ENCODE measurements at regions of chr3 and their contacts with region 1.

Region 1: GRCh38 chr3:132253262-132253878 is 63.8 kb upstream of the ACP3 start:
- DNase-seq: peak; percentile 44 to 67 (median 49)
- ATAC-seq: peak; percentile 63
- H3K4me3 ChIP-seq: no peak overlapping the region
- H3K27ac ChIP-seq: no peak overlapping the region
- H3K4me1 ChIP-seq: peaks cover 8% of the 10 kb centered on the region
- H3K27me3 ChIP-seq: no peaks in the 10 kb centered on the region
- CTCF ChIP-seq: peak; percentile 65 to 84 (median 78)
- POLR2A ChIP-seq: no peak

Region 2: GRCh38 chr3:131728898-131729611 is 524.3 kb before region 1 on chr3:
- intact Hi-C with region 1: no loop called
- DNase-seq: no peak
- ATAC-seq: no peak
- H3K4me3 ChIP-seq: no peak overlapping the region
- H3K27ac ChIP-seq: no peak overlapping the region
- H3K4me1 ChIP-seq: no peaks in the 10 kb centered on the region
- H3K27me3 ChIP-seq: no peaks in the 10 kb centered on the region
- CTCF ChIP-seq: no peak
- POLR2A ChIP-seq: no peak

Region 3: DNA sequence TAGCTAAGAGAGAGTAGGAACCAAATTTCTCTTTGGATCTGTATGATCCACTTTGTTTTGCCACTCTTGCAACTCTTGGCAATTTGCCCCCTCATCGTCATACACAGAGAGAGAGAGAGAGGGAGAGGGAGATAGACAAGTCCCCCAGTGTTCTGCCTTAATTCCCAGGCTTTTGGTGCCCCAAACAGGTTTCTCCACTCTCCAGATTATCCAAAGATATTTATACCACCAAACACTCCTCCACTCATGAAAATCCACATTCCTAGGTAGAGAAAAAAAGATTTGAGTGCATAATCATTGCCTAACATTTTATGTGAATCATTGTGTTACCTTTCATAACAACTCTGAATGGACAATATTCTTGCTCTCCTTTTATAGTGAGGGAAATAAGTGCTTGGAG is 79.1 kb after region 1 on chr3:
- intact Hi-C with region 1: loop called (anchors 5 kb)
- DNase-seq: peak in 2 of 4 donors; percentile 9 to 30
- ATAC-seq: peak; percentile 47
- H3K4me3 ChIP-seq: no peak overlapping the region
- H3K27ac ChIP-seq: peak overlapping the region in 1 of 4 donors; percentile 31
- H3K4me1 ChIP-seq: peaks cover 4% of the 10 kb centered on the region
- H3K27me3 ChIP-seq: no peaks in the 10 kb centered on the region
- CTCF ChIP-seq: no peak
- POLR2A ChIP-seq: no peak

Region 4: GRCh38 chr3:132346841-132347736 is 93.7 kb after region 1 on chr3:
- intact Hi-C with region 1: loop called (anchors 5 kb)
- DNase-seq: peak; percentile 13 to 34 (median 28)
- ATAC-seq: peak; percentile 80
- H3K4me3 ChIP-seq: no peak overlapping the region
- H3K27ac ChIP-seq: peak overlapping the region in 1 of 4 donors; percentile 44
- H3K4me1 ChIP-seq: peaks cover 16% of the 10 kb centered on the region
- H3K27me3 ChIP-seq: no peaks in the 10 kb centered on the region
- CTCF ChIP-seq: no peak
- POLR2A ChIP-seq: no peak

Measured in body of pancreas (tissue), 4 donors.